Endothelial cell of umbilical vein (primary cell): ENCODE measurements at regions of chrX and their contacts with region 1.

Region 1: GRCh38 chrX:115560978-115561604 is at the start of gene PLS3:
- DNase-seq: peak; percentile 84
- H3K4me3 ChIP-seq: peak within 1 kb of the TSS; percentile 60 to 89 (median 77)
- H3K27ac ChIP-seq: peak within 1 kb of the TSS; percentile 94
- H3K4me1 ChIP-seq: peaks cover 38% of the 10 kb centered on the region
- H3K27me3 ChIP-seq: no peaks in the 10 kb centered on the region
- CTCF ChIP-seq: no peak
- POLR2A ChIP-seq: peak; percentile 79
- total RNA-seq, gene PLS3: 305 and 329 TPM in 2 replicates

Region 2: DNA sequence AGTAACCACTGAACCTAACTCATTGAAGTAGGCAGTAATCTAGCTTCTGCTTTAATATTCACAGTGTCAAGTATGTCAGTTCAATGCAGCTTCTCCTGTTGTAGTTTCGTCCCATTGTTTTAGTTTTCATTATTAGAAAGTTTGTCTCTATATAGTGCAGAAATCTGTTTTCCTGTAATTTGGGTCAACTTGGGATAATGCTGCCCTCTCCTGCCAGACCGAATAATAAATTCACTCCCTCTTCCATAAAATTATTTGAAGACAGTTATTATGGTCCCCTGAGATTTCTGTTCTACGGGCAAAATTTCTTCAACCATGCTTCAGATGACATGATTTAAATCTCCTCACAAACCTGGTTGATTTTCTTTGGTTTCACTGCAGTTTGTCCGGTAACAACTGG is 276.2 kb before region 1 on chrX:
- CTCF ChIA-PET with region 1: no interaction called
- POLR2A ChIA-PET with region 1: no interaction called
- dilution Hi-C with region 1: no loop called
- intact Hi-C with region 1: no loop called
- DNase-seq: peak; percentile 5
- H3K4me3 ChIP-seq: no peak overlapping the region
- H3K27ac ChIP-seq: no peak overlapping the region
- H3K4me1 ChIP-seq: no peaks in the 10 kb centered on the region
- H3K27me3 ChIP-seq: no peaks in the 10 kb centered on the region
- CTCF ChIP-seq: no peak
- POLR2A ChIP-seq: no peak

Region 3: DNA sequence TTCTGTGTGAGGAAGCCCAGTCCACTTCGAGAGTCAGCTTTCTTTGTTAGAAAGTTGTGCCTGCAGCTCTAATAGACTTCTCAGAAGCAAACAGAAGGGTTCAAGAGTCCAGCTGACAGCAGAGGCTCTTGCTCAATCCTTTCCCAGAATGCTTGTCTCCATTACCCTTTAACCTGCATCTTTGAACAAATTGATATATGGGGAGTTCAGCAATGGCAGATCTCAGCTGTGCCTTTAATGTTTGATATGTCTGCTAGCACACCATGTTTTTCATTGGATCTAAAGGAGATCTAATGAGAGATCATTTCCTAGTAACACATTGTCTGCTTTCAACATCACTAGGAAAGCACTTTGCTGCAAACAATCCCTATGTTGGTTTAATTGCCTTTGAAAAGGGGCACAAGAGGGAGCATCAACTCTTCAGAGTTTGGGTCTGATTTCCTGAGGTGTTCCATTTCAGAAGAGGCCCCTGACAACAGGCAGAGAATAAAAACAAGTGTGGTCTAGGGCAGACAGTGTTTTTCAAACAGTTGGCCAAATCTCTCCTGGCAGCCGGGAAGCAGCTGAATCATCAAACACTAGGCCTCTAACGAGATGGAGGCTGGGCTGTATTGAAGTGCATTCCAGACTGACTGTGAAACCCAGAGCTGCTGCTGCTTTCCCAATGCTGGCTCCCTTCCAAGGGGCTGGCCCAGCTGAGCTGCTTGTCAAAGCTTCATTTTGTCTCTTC is 216.0 kb before region 1 on chrX:
- CTCF ChIA-PET with region 1: interaction called, 5 read pairs
- POLR2A ChIA-PET with region 1: no interaction called
- dilution Hi-C with region 1: no loop called
- intact Hi-C with region 1: loop called (anchors 1 kb)
- DNase-seq: peak; percentile 94
- H3K4me3 ChIP-seq: no peak overlapping the region
- H3K27ac ChIP-seq: peak overlapping the region; percentile 61
- H3K4me1 ChIP-seq: peaks cover 11% of the 10 kb centered on the region
- H3K27me3 ChIP-seq: no peaks in the 10 kb centered on the region
- CTCF ChIP-seq: no peak
- POLR2A ChIP-seq: no peak

Region 4: DNA sequence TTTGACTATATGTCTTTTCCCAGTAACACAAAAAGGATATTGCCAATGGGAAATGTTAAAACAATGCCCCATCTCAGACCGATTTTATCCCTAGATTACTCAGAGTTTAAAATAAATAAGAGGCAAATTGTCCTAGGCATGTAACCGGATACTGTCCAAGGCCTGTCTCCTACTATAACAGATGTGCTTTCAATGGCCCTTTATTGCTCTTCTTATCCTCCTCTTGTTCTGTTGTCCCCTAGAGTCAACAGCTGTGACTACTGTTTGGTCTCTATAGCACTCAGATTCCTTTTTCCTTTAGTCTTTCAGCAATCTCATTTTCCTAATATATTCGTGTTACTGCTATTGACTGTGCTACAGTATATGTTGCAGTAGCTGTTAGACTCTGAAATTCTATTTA is 66.9 kb before region 1 on chrX:
- CTCF ChIA-PET with region 1: no interaction called
- POLR2A ChIA-PET with region 1: no interaction called
- dilution Hi-C with region 1: no loop called
- intact Hi-C with region 1: loop called (anchors 5 kb)
- DNase-seq: peak; percentile 14
- H3K4me3 ChIP-seq: no peak overlapping the region
- H3K27ac ChIP-seq: no peak overlapping the region
- H3K4me1 ChIP-seq: peaks cover 2% of the 10 kb centered on the region
- H3K27me3 ChIP-seq: no peaks in the 10 kb centered on the region
- CTCF ChIP-seq: no peak
- POLR2A ChIP-seq: no peak

Region 5: DNA sequence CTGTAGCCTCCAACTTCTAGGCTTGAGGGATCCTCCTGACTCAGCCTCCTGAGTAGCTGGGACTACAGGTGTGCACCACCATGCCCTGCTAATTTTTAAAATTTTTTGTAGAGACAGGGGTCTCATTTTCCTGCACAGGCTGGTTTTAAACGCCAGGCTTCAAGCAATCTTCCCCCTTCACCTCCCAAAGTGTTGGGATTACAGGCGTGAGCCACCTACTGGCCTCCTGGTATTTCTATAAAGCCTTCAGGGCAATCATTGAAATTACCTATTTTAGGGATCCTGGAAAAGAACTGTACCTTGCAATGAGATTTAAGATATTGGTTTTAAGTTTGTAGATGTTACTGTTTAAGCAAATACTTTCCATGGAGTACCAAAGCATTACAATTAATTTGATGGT is 13.6 kb before region 1 on chrX:
- CTCF ChIA-PET with region 1: interaction called, 13 read pairs
- POLR2A ChIA-PET with region 1: no interaction called
- dilution Hi-C with region 1: no loop called
- intact Hi-C with region 1: no loop called
- DNase-seq: no peak
- H3K4me3 ChIP-seq: no peak overlapping the region
- H3K27ac ChIP-seq: no peak overlapping the region
- H3K4me1 ChIP-seq: peaks cover 15% of the 10 kb centered on the region
- H3K27me3 ChIP-seq: no peaks in the 10 kb centered on the region
- CTCF ChIP-seq: no peak
- POLR2A ChIP-seq: no peak

Region 6: GRCh38 chrX:115616943-115617563 is 56.0 kb after region 1 on chrX:
- CTCF ChIA-PET with region 1: interaction called, 3 read pairs
- POLR2A ChIA-PET with region 1: interaction called, 4 read pairs
- dilution Hi-C with region 1: no loop called
- intact Hi-C with region 1: loop called (anchors 1 kb)
- DNase-seq: peak; percentile 49
- H3K4me3 ChIP-seq: no peak overlapping the region
- H3K27ac ChIP-seq: no peak overlapping the region
- H3K4me1 ChIP-seq: peaks cover 33% of the 10 kb centered on the region
- H3K27me3 ChIP-seq: no peaks in the 10 kb centered on the region
- CTCF ChIP-seq: no peak
- POLR2A ChIP-seq: no peak

Region 7: GRCh38 chrX:115630204-115630603 is 69.1 kb after region 1 on chrX:
- CTCF ChIA-PET with region 1: no interaction called
- POLR2A ChIA-PET with region 1: no interaction called
- dilution Hi-C with region 1: no loop called
- intact Hi-C with region 1: no loop called
- DNase-seq: no peak
- H3K4me3 ChIP-seq: no peak overlapping the region
- H3K27ac ChIP-seq: no peak overlapping the region
- H3K4me1 ChIP-seq: no peaks in the 10 kb centered on the region
- H3K27me3 ChIP-seq: no peaks in the 10 kb centered on the region
- CTCF ChIP-seq: no peak
- POLR2A ChIP-seq: no peak